ENCODE measurements at regions of chr6 and their contacts with region 1.

Region 1: DNA sequence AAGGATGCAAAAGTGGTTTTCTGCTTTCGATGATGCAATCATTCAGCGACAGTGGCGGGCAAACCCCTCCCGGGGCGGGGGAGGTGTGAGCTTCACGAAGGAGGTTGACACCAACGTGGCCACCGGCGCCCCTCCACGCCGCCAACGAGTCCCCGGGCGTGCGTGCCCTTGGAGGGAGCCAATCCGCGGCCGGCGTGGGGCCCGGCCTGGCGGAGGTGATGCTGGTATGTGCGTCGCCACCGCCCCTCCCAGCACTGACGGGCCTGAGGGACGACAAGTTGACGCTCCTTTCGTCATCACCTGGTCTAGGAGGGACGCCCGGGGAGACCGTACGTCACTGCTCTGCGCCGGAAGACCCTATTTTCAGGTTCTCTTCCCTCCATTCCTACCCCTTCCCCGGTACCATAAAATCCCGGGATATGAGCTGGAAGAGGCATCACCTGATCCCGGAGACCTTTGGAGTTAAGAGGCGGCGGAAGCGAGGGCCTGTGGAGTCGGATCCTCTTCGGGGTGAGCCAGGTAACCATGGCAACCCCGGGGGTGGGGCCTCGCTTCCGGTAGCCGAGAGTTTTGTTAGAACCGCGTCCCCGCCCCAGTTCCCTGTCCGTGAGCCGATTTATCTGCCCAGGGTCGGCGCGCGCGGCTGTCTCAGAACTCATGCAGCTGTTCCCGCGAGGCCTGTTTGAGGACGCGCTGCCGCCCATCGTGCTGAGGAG is at the start of gene DXO:
- DNase-seq: peak; percentile 95 to 98
- ATAC-seq: peak; percentile 91 to 94
- H3K4me3 ChIP-seq: peak within 1 kb of the TSS; percentile 72
- H3K27ac ChIP-seq: peak within 1 kb of the TSS; percentile 89 to 93
- H3K4me1 ChIP-seq: peaks cover 17% of the 10 kb centered on the region; the same call in 1 of the 3 replicates
- CTCF ChIP-seq: no peak
- EP300 ChIP-seq: no peak
- POLR2A ChIP-seq: no peak
- RAD21 ChIP-seq: no peak
- polyA plus RNA-seq, gene DXO: 12.7 and 16.0 TPM in 2 replicates

Region 2: DNA sequence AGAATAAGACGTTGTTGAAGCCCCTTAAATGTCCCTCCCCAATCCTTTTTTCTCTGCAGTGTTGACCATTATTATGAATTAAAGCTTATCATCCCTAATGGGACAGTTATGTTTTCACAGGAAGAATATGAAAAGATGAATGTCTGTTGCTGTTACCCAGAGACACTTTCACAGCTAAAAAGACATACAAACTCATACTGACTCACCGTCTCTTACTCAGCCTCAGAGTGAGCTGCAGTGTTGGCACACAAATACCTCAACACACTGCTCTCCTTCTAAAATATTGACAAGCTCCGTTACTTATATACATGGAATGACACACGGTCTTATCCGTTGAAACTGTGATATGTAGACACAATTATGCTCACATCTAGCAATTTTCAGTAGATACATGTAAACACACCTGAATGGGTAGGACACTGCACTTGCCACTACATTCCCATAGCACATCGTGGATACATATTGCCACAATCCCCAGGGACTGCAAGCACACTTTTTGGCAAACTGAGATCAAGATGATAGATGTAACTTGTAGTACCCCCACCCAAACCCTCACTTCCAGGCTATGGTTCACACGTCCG is 219.3 kb before region 1 on chr6:
- CTCF ChIA-PET with region 1: no interaction called
- POLR2A ChIA-PET with region 1: no interaction called
- DNase-seq: peak in 1 of 2 experiments; percentile 37
- ATAC-seq: peak; percentile 90 to 94
- H3K4me3 ChIP-seq: no peak overlapping the region
- H3K27ac ChIP-seq: peak overlapping the region in 1 of 2 experiments; percentile 53; a peak in 2 of 6 replicates
- H3K4me1 ChIP-seq: peaks cover 13% of the 10 kb centered on the region
- CTCF ChIP-seq: no peak
- EP300 ChIP-seq: no peak
- POLR2A ChIP-seq: no peak
- RAD21 ChIP-seq: no peak

Region 3: GRCh38 chr6:31958741-31959739 is 13.1 kb before region 1 on chr6 and contains the starts of genes NELFE and SKIC2:
- CTCF ChIA-PET with region 1: interaction called, 10 read pairs
- POLR2A ChIA-PET with region 1: interaction called, 13 read pairs
- DNase-seq: peak; percentile 96 to 98
- ATAC-seq: peak; percentile 99 to 100
- H3K4me3 ChIP-seq: peak within 1 kb of the TSS; percentile 94
- H3K27ac ChIP-seq: peak within 1 kb of the TSS; percentile 91 to 93
- H3K4me1 ChIP-seq: peaks cover 13% of the 10 kb centered on the region; the same call in 2 of the 3 replicates
- CTCF ChIP-seq: no peak
- EP300 ChIP-seq: no peak
- POLR2A ChIP-seq: peak; percentile 53
- RAD21 ChIP-seq: no peak
- polyA plus RNA-seq, gene NELFE: 54.1 and 64.2 TPM in 2 replicates
- polyA plus RNA-seq, gene SKIC2: 20.8 and 23.4 TPM in 2 replicates

Measured in A549 (cell line).